ENCODE measurements at regions of chr3 and their contacts with region 1.

Region 1: DNA sequence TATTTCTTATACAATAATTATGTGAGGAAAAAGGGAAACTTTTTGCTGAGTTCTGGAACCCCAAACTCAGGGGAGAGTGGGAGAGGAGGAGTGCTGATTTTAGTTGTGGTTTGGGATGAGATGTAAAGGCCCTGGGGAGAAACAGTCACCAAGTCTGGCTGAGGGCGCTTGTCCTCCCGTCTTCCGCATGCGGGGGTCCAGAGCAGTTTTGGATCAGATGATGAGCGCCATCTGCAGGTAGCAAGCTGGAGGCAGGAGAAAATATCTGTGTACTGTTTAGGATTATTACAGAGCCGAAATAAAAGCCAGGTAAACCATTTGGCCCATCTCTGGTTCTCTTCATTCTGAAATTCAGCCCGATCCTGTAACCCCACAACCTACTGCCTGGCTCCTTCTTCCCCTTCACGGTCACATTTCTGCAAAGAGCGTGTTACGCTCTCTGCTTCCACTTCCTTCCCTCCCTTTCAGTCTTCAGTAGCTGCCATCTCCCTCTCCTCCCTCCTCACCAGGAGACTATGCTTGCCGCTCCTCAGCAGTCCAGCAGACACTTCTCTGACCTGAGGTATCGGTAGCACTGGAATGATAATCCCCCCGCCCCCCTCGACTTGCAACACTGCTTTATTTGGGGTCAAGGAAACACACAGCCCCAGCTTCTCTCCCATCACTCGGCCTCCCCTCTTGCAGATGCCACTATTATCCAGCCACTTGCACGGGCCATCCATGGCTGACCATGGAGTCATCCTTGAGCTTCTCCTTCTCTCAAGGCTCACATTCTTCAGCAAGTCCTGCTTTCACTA is 1.4 kb upstream of the PARP14 start:
- DNase-seq: peak; percentile 90
- H3K4me3 Mint-ChIP-seq: peak overlapping the region; percentile 88
- H3K27ac Mint-ChIP-seq: peak overlapping the region; percentile 98
- H3K4me1 Mint-ChIP-seq: peaks cover 57% of the 10 kb centered on the region
- H3K27me3 Mint-ChIP-seq: no peaks in the 10 kb centered on the region

Region 2: DNA sequence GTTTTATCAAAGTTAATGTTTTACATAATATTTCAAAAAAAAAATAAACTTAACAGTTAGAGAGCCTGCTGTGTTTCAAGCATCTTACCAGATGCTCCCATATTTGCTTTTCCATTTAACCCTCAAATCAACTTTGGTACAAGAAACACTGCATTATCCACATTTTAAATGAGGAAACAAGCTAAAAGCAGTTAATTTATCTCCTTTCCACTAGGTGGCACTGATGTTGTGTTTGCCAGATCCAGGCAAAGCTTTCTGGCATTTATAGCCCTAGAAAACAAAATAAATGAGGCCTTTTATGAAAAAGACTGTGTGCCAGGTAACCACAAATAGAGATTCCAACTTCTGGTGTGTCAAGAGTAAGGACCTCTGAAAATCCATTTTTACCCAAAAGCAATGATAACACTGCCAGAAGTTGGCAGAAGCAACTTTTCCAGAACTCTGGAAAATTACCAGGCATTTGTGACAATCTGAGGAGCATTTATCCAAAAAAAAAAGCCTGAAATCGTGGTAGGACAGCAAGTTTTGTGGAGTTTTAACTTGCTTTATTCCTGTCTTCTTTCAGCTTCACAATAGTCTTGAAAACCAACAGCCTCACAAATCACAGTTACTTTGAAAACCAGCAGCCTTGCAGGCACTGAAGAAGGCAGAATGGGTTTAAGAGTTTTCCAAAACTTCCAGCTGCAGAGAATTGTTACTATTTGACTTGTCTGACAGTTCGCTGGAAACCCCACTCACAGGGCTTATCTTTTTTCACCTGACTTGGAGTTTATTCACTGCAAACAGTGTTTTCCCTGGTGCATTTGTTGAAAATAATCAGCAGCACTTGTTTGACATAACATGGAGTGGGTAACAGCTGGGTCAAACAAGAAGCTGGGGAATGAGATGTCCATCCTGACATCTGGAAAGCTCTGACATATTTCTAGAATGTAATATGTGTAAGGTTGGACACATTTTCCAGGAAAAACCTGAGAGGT is 286.1 kb before region 1 on chr3:
- CTCF ChIA-PET with region 1: interaction called, 22 read pairs
- DNase-seq: peak; percentile 40
- H3K4me3 Mint-ChIP-seq: no peak overlapping the region
- H3K27ac Mint-ChIP-seq: no peak overlapping the region
- H3K4me1 Mint-ChIP-seq: peaks cover 27% of the 10 kb centered on the region
- H3K27me3 Mint-ChIP-seq: no peaks in the 10 kb centered on the region

Region 3: GRCh38 chr3:122458992-122459391 is 220.3 kb before region 1 on chr3:
- CTCF ChIA-PET with region 1: interaction called, 12 read pairs
- DNase-seq: no peak
- H3K4me3 Mint-ChIP-seq: no peak overlapping the region
- H3K27ac Mint-ChIP-seq: no peak overlapping the region
- H3K4me1 Mint-ChIP-seq: no peaks in the 10 kb centered on the region
- H3K27me3 Mint-ChIP-seq: no peaks in the 10 kb centered on the region

Region 4: GRCh38 chr3:122564155-122564912 is 114.9 kb before region 1 on chr3 and contains the starts of genes DTX3L and PARP9:
- CTCF ChIA-PET with region 1: interaction called, 183 read pairs
- DNase-seq: peak; percentile 92
- H3K4me3 Mint-ChIP-seq: peak within 1 kb of the TSS; percentile 99
- H3K27ac Mint-ChIP-seq: peak within 1 kb of the TSS; percentile 97
- H3K4me1 Mint-ChIP-seq: peaks cover 79% of the 10 kb centered on the region
- H3K27me3 Mint-ChIP-seq: no peaks in the 10 kb centered on the region

Region 5: DNA sequence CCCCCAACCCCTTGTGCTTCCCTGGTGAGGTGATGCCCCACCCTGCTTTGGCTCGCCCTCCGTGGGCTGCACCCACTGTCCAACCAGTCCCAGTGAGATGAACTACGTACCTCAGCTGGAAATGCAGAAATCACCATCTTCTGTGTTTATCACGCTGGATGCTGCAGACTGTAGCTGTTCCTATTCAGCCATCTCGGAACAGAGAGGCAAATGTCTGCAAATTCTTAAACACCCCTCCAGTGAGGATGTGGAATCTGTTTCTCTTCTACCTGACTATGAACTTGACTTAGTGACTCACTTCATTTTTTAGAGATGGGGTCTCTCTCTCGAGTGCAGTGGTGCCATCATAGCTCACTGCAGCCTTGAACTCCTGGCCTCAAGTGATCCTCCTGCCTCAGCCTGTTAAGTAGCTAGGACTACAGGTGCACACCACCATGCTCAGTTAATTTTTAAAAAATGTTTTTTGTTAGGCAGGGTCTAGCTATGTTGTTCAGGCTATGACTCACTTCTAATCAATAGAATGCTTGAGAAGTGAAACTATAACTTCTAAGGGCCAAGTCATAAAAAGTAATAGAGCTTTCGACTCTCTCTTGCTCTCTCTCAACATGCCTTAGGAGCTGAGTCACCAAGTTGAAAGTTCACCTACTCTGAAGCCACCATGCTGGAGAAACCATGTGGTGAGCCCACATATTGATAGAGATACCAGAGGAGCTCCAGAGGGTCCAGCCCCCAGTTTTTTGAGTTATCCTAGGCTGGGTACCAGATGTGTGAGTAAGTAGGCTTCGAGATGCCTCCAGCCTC is 10.2 kb before region 1 on chr3:
- CTCF ChIA-PET with region 1: interaction called, 28 read pairs
- DNase-seq: no peak
- H3K4me3 Mint-ChIP-seq: no peak overlapping the region
- H3K27ac Mint-ChIP-seq: peak overlapping the region; percentile 49
- H3K4me1 Mint-ChIP-seq: peaks cover 14% of the 10 kb centered on the region
- H3K27me3 Mint-ChIP-seq: no peaks in the 10 kb centered on the region

Measured in activated naive CD4-positive, alpha-beta T cell treated with anti-CD3 and anti-CD28 coated beads, Interleukin-2, amount 10 ng/mL, durations not matched to agents 7 days and 5 days (primary cell).